ENCODE measurements at regions of chr17 and their contacts with region 1.

Region 1: DNA sequence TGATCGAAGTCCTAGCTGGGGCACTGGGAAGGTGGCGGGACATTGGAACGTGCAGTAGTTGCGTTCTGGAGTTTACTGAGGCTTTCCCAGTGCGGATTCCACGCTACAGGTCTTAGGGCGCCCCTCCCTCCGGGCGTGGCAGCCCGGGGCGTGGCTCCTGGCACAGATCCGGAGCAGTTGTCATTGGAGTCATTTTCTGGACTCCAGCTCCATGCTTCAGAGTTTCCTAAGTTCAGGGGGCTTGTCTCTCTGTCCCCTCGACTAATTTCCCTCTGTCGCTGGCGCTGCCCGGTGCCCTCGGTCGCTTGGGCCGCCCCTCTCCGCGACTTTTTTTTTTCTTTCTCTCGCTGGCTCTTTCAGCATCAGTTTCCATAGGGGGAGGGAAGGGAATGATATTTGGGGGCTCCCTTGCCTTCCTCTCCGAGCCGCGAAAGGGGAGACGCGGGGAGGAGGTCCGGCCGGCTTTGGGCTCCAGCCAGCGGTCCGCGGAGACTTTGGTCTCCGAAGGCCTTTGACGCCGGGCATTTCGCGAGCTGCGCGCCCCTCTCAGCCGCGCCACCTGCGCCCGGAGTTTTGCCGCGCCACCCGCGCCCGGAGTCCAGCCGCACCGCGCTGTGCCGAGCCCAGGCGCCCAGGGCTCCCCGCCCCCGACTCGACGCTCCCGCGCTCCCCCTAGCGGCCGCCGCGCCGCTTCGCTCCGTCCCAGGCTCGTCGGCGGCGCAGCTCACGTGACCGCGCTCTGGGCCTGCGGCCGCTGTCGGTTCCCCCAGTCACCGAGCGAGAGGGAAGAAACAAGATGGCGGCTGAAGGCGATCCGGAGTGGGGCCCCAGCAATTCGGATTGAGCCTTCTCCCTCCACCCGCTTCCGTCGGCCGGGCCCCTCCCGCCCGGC is at the start of gene BPTF:
- DNase-seq: peak; percentile 84 to 95 (median 90)
- ATAC-seq: peak; percentile 93
- H3K4me3 ChIP-seq: peak within 1 kb of the TSS; percentile 77
- H3K4me3 Mint-ChIP-seq: peak within 1 kb of the TSS; percentile 85 to 99 (median 98)
- H3K27ac ChIP-seq: peak within 1 kb of the TSS; percentile 74
- H3K27ac Mint-ChIP-seq: peak within 1 kb of the TSS; percentile 96 to 99 (median 98)
- H3K4me1 ChIP-seq: peaks cover 17 to 28% of the 10 kb centered on the region in 2 donors
- H3K4me1 Mint-ChIP-seq: peaks cover 20 to 39% (median 33%) of the 10 kb centered on the region in 7 donors
- H3K27me3 ChIP-seq: no peaks in the 10 kb centered on the region
- H3K27me3 Mint-ChIP-seq: peaks cover 0 to 23% (median 0%) of the 10 kb centered on the region in 5 donors
- total RNA-seq, gene BPTF: 111 to 219 (median 163) TPM

Region 2: GRCh38 chr17:67245073-67245755 is 579.8 kb before region 1 on chr17 and contains the start of gene HELZ:
- CTCF ChIA-PET with region 1: no interaction called
- POLR2A ChIA-PET with region 1: no interaction called
- intact Hi-C with region 1: loop called (anchors 1 to 10 kb)
- DNase-seq: peak; percentile 45 to 81 (median 79)
- ATAC-seq: peak; percentile 89
- H3K4me3 ChIP-seq: peak within 1 kb of the TSS; percentile 83
- H3K4me3 Mint-ChIP-seq: peak within 1 kb of the TSS; percentile 87 to 95 (median 90)
- H3K27ac ChIP-seq: peak within 1 kb of the TSS; percentile 84
- H3K27ac Mint-ChIP-seq: peak within 1 kb of the TSS; percentile 81 to 96 (median 90)
- H3K4me1 ChIP-seq: peaks cover 11 to 49% of the 10 kb centered on the region in 2 donors
- H3K4me1 Mint-ChIP-seq: peaks cover 31 to 52% (median 48%) of the 10 kb centered on the region in 7 donors
- H3K27me3 ChIP-seq: no peaks in the 10 kb centered on the region
- H3K27me3 Mint-ChIP-seq: peaks cover 0 to 5% (median 0%) of the 10 kb centered on the region in 5 donors
- total RNA-seq, gene HELZ: 68.6 to 114 (median 89.3) TPM

Region 3: DNA sequence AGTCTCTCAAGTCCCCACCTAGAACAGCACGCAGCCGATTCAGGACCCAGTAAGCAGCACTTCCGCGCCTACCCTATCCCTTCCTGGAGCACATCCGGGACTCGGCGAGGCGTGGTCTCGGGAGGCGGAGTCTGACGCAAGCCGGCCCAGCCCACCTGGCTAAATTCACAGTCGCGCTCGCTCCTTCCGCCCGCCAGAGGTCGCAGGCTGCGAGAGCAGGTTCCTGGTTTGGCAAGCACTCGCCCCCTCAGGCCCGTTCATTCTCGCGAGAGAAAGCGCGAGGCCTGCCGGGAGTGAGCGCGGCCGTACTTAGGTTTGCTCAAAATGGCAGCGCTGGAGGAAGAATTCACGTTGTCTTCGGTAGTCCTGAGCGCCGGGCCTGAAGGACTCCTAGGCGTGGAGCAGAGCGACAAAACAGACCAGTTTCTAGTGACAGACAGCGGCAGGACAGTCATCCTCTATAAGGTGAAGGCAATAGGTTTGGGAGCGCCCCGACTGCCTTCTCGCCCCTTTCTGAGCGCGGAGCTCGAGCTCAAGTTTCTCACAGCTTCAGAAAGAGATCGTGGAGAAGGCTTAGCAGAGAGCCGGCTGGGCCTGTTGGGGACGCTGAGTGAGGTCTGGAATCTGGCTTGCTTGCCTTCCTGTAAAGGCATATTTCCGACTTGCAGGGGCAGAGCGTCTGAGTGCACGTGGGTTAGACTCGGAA is 107.2 kb before region 1 on chr17 and contains the start of gene NOL11:
- CTCF ChIA-PET with region 1: no interaction called
- POLR2A ChIA-PET with region 1: interaction called, 5 read pairs
- intact Hi-C with region 1: loop called (anchors 1 kb)
- DNase-seq: peak; percentile 97 to 100 (median 99)
- ATAC-seq: peak; percentile 98
- H3K4me3 ChIP-seq: peak within 1 kb of the TSS; percentile 96
- H3K4me3 Mint-ChIP-seq: peak within 1 kb of the TSS; percentile 95 to 100 (median 100)
- H3K27ac ChIP-seq: peak within 1 kb of the TSS; percentile 95
- H3K27ac Mint-ChIP-seq: peak within 1 kb of the TSS; percentile 96 to 100 (median 99)
- H3K4me1 ChIP-seq: peaks cover 14 to 20% of the 10 kb centered on the region in 2 donors
- H3K4me1 Mint-ChIP-seq: peaks cover 7 to 47% (median 28%) of the 10 kb centered on the region in 7 donors
- H3K27me3 ChIP-seq: no peaks in the 10 kb centered on the region
- H3K27me3 Mint-ChIP-seq: peaks cover 0 to 5% (median 0%) of the 10 kb centered on the region in 5 donors
- total RNA-seq, gene NOL11: 50.0 to 72.9 (median 65.1) TPM

Region 4: DNA sequence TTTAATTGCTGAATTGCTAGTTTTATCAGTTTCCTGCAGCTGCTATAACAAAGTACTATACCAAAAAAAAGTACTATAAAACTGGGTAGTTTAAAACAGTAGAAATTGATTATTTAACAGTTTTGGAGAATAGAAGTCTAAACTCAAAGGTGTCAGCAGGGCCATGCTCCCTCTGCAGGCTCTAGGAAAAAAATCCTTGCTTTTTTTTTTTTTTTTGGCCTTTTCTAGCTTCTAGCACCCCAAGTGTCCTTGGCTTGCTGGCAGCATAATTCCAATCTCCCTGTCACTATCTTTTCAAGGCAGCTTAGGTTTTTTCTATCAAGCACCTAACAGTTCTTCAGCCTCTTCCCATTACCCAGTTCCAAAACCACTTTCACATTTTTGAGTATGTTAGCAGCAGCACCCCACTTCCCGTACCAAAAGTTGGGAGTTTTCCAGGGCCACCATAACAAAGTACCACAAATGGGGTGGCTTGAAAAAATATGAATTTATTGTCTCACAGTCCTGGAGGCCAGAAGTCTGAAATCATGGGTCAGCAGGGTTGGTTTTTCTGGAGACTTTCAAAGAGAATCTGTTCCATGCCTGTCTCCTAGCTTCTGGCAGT is 37.7 kb after region 1 on chr17:
- CTCF ChIA-PET with region 1: no interaction called
- POLR2A ChIA-PET with region 1: no interaction called
- intact Hi-C with region 1: loop called (anchors 2 to 5 kb)
- DNase-seq: no peak
- ATAC-seq: no peak
- H3K4me3 ChIP-seq: no peak overlapping the region
- H3K4me3 Mint-ChIP-seq: peak overlapping the region in 2 of 10 donors; percentile 1 to 16
- H3K27ac ChIP-seq: no peak overlapping the region
- H3K27ac Mint-ChIP-seq: peak overlapping the region in 3 of 9 donors; percentile 22 to 67 (median 47)
- H3K4me1 ChIP-seq: peaks cover 12 to 15% of the 10 kb centered on the region in 2 donors
- H3K4me1 Mint-ChIP-seq: peaks cover 40 to 81% (median 72%) of the 10 kb centered on the region in 7 donors
- H3K27me3 ChIP-seq: no peaks in the 10 kb centered on the region
- H3K27me3 Mint-ChIP-seq: no peaks in the 10 kb centered on the region

Region 5: GRCh38 chr17:69327060-69327831 is 1502.3 kb after region 1 on chr17 and contains the start of gene ABCA5:
- CTCF ChIA-PET with region 1: no interaction called
- POLR2A ChIA-PET with region 1: no interaction called
- intact Hi-C with region 1: loop called in 1 of 2 experiments (anchors 5 kb)
- DNase-seq: peak; percentile 85 to 91 (median 89)
- ATAC-seq: peak; percentile 97
- H3K4me3 ChIP-seq: peak within 1 kb of the TSS; percentile 85
- H3K4me3 Mint-ChIP-seq: peak within 1 kb of the TSS; percentile 90 to 97 (median 95)
- H3K27ac ChIP-seq: peak within 1 kb of the TSS; percentile 76
- H3K27ac Mint-ChIP-seq: peak within 1 kb of the TSS; percentile 96 to 99 (median 98)
- H3K4me1 ChIP-seq: peaks cover 9 to 10% of the 10 kb centered on the region in 2 donors
- H3K4me1 Mint-ChIP-seq: peaks cover 17 to 39% (median 32%) of the 10 kb centered on the region in 7 donors
- H3K27me3 ChIP-seq: no peaks in the 10 kb centered on the region
- H3K27me3 Mint-ChIP-seq: peaks cover 0 to 10% (median 4%) of the 10 kb centered on the region in 5 donors
- total RNA-seq, gene ABCA5: 29.6 to 49.9 (median 41.3) TPM

Measured in naive thymus-derived CD4-positive, alpha-beta T cell (primary cell).